ENCODE measurements at regions of chr5 and their contacts with region 1.

Region 1: GRCh38 chr5:84603568-84604185 is 219.0 kb upstream of the EDIL3 start:
- DNase-seq: no peak
- ATAC-seq: peak; percentile 25
- H3K4me3 ChIP-seq: no peak overlapping the region
- H3K27ac ChIP-seq: no peak overlapping the region
- H3K4me1 ChIP-seq: no peaks in the 10 kb centered on the region
- H3K27me3 ChIP-seq: no peaks in the 10 kb centered on the region
- CTCF ChIP-seq: no peak
- EP300 ChIP-seq: no peak
- POLR2A ChIP-seq: no peak
- RAD21 ChIP-seq: no peak

Region 2: GRCh38 chr5:84706678-84707641 is 103.3 kb after region 1 on chr5:
- CTCF ChIA-PET with region 1: no interaction called
- POLR2A ChIA-PET with region 1: no interaction called
- RAD21 ChIA-PET with region 1: no interaction called
- SMC1A ChIA-PET with region 1: no interaction called
- in situ Hi-C with region 1: no loop called
- intact Hi-C with region 1: loop called (anchors 2 kb)
- DNase-seq: peak; percentile 17
- ATAC-seq: peak; percentile 88
- H3K4me3 ChIP-seq: no peak overlapping the region
- H3K27ac ChIP-seq: no peak overlapping the region
- H3K4me1 ChIP-seq: no peaks in the 10 kb centered on the region
- H3K27me3 ChIP-seq: no peaks in the 10 kb centered on the region
- CTCF ChIP-seq: no peak
- EP300 ChIP-seq: no peak; a peak in 1 of 4 replicates
- POLR2A ChIP-seq: no peak
- RAD21 ChIP-seq: no peak

Measured in GM12878 (cell line).